IMR-90 (cell line): ENCODE measurements at regions of chr1 and their contacts with region 1.

Region 1: DNA sequence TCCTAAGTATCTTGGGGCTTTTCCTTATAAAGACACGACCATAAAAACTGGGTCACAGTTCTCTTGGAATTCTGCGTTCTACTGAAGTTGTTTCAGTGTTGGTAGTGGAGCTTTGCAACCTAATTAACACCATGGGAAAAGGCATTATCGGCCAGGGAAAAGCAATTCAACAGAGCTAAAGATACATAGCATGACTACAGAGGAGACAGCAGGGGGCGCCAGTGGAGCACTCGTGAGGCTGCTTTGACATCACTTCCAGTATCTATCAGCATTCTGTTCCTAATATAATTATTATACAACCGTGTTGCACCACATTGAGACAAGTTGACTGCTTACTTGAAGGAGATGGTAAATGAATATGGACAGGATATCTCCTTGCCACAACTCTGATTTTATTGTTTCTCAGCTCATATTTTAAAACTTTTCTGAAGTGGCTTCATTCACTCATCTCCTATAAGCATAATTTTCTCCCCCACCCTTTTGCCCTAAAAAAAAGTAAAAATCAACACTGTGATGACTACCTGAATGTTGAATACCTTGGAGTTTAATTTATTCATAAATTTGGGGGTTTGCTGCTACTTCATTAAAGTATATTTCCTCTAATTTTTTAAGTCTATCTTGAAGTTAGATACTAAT is 39.4 kb downstream of the ZP4 start:
- DNase-seq: peak; percentile 35
- ATAC-seq: peak; percentile 71
- H3K4me3 ChIP-seq: no peak overlapping the region
- H3K27ac ChIP-seq: no peak overlapping the region
- H3K4me1 ChIP-seq: no peaks in the 10 kb centered on the region
- H3K27me3 ChIP-seq: no peaks in the 10 kb centered on the region
- CTCF ChIP-seq: peak; percentile 63
- POLR2A ChIP-seq: no peak
- RAD21 ChIP-seq: peak; percentile 69

Region 2: GRCh38 chr1:237864338-237865244 is 13.3 kb after region 1 on chr1:
- CTCF ChIA-PET with region 1: interaction called, 12 read pairs
- POLR2A ChIA-PET with region 1: no interaction called
- dilution Hi-C with region 1: no loop called
- in situ Hi-C with region 1: no loop called
- intact Hi-C with region 1: no loop called
- DNase-seq: no peak
- ATAC-seq: peak; percentile 79
- H3K4me3 ChIP-seq: peak overlapping the region; percentile 26; the same call in 1 of the 2 replicates
- H3K27ac ChIP-seq: no peak overlapping the region
- H3K4me1 ChIP-seq: no peaks in the 10 kb centered on the region
- H3K27me3 ChIP-seq: no peaks in the 10 kb centered on the region
- CTCF ChIP-seq: peak; percentile 67
- POLR2A ChIP-seq: no peak
- RAD21 ChIP-seq: peak; percentile 72

Region 3: GRCh38 chr1:238409932-238410331 is 558.6 kb after region 1 on chr1:
- CTCF ChIA-PET with region 1: no interaction called
- POLR2A ChIA-PET with region 1: no interaction called
- dilution Hi-C with region 1: no loop called
- in situ Hi-C with region 1: no loop called
- intact Hi-C with region 1: loop called (anchors 10 kb)
- DNase-seq: peak; percentile 44
- ATAC-seq: no peak
- H3K4me3 ChIP-seq: no peak overlapping the region
- H3K27ac ChIP-seq: no peak overlapping the region
- H3K4me1 ChIP-seq: peaks cover 9% of the 10 kb centered on the region
- H3K27me3 ChIP-seq: no peaks in the 10 kb centered on the region
- CTCF ChIP-seq: no peak
- POLR2A ChIP-seq: no peak
- RAD21 ChIP-seq: no peak

Region 4: DNA sequence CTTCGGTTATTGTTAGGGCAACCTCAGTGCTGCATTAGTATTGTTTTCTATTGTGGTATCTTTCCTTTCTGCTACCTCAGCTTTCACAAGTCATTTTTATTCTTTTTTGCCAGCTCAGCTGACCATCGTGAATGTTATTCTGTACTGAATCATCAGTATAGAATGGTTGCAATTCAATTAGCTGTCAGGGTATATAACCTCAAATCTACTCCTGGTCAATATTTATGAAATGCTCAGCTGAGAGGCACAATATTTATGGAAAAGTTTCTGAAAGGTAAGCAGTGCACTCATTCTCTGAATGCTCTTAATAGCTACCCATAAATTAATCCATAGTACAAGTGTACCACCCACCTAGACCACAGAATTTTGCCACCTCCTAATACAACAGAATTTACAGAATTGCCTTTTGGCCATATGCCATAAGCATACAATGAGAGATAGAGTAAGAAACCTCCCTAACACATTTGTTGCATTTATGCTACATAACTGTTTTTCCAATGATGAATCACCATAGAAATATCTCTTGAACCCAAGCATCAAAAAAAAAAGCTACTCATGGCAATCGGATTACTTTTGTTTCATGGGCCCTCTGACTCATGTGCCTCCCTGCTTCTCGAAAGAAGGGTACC is 802.5 kb after region 1 on chr1:
- CTCF ChIA-PET with region 1: no interaction called
- POLR2A ChIA-PET with region 1: no interaction called
- dilution Hi-C with region 1: no loop called
- in situ Hi-C with region 1: no loop called
- intact Hi-C with region 1: no loop called
- DNase-seq: peak; percentile 77
- ATAC-seq: peak; percentile 78
- H3K4me3 ChIP-seq: no peak overlapping the region
- H3K27ac ChIP-seq: no peak overlapping the region
- H3K4me1 ChIP-seq: peaks cover 3% of the 10 kb centered on the region
- H3K27me3 ChIP-seq: no peaks in the 10 kb centered on the region
- CTCF ChIP-seq: no peak
- POLR2A ChIP-seq: no peak
- RAD21 ChIP-seq: no peak

Region 5: GRCh38 chr1:238690415-238690814 is 839.1 kb after region 1 on chr1:
- CTCF ChIA-PET with region 1: no interaction called
- POLR2A ChIA-PET with region 1: no interaction called
- dilution Hi-C with region 1: no loop called
- in situ Hi-C with region 1: no loop called
- intact Hi-C with region 1: loop called (anchors 10 kb)
- DNase-seq: peak; percentile 35
- ATAC-seq: no peak
- H3K4me3 ChIP-seq: no peak overlapping the region
- H3K27ac ChIP-seq: no peak overlapping the region
- H3K4me1 ChIP-seq: no peaks in the 10 kb centered on the region
- H3K27me3 ChIP-seq: no peaks in the 10 kb centered on the region
- CTCF ChIP-seq: peak; percentile 30
- POLR2A ChIP-seq: no peak
- RAD21 ChIP-seq: peak; percentile 45